Dorsolateral prefrontal cortex (tissue), 120 donors: ENCODE measurements at regions of chr15 and their contacts with region 1.

Region 1: GRCh38 chr15:58933281-58934113 is at the start of gene SLTM:
- DNase-seq: peak; percentile 77 to 93 (median 88)
- H3K4me3 ChIP-seq: peak within 1 kb of the TSS; percentile 53 to 97 (median 82)
- H3K27ac ChIP-seq: peak within 1 kb of the TSS; percentile 93 to 100 (median 99)
- H3K27me3 ChIP-seq: no peaks in the 10 kb centered on the region
- CTCF ChIP-seq: peak in 45 of 56 donors; percentile 3 to 70 (median 40)
- total RNA-seq, gene SLTM: 60.6 to 122 (median 90.8) TPM

Region 2: DNA sequence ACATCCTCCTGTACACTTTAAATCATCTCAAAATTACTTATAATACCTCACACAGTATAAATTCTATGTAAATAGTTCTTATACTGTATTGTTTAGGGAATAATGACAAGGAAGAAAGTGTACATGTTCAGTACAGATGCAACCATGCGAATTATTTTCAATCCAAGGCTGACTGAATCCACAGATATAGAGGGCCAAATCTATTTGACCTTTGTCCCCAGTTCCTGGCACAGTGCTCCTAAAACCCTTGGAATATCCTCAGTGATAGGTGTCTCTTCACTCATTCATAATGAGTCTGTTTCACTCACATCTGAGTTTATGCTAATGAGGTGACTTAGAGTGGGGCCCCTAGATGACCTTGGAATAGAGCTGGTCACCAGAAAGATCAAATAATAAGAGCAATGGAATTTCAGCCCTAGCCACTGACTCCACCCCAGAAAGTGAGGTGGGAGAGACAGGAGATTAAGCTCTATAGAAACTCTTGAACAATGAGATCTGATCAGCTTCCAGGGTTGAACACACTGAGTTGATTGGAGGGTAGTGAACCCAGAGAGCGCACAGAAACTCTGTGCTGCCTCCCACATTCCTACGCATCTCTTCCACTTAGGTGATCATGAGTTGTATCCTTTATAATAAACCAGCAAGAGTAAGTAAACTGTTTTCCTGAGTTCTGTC is 249.3 kb before region 1 on chr15:
- intact Hi-C with region 1: loop called in 1 of 2 experiments (anchors 10 kb)
- DNase-seq: no peak
- H3K4me3 ChIP-seq: no peak overlapping the region
- H3K27ac ChIP-seq: no peak overlapping the region
- H3K27me3 ChIP-seq: no peaks in the 10 kb centered on the region
- CTCF ChIP-seq: no peak

Region 3: DNA sequence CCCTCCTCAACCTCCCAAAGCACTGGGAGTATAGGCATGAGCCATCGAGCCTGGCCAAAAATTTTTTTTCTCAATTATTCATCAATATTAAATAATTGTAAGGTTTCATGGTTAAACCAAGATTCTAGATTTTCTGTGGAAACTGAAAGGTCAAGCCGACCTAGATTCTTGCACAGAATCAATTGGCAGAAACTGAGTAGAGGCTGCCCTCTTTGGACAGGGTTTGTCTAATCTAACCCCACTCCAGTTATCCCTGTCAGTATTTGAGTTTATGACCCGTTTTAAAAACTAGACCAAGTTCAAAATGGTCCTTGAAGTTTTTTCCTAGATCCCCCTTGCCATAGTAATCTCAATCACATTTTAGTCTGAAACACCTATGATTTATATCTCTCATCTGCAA is 175.4 kb before region 1 on chr15:
- intact Hi-C with region 1: loop called in 1 of 2 experiments (anchors 5 kb)
- DNase-seq: no peak
- H3K4me3 ChIP-seq: no peak overlapping the region
- H3K27ac ChIP-seq: peak overlapping the region in 6 of 59 donors; percentile 8 to 50 (median 34)
- H3K27me3 ChIP-seq: no peaks in the 10 kb centered on the region
- CTCF ChIP-seq: peak in 52 of 56 donors; percentile 18 to 75 (median 54)

Region 4: DNA sequence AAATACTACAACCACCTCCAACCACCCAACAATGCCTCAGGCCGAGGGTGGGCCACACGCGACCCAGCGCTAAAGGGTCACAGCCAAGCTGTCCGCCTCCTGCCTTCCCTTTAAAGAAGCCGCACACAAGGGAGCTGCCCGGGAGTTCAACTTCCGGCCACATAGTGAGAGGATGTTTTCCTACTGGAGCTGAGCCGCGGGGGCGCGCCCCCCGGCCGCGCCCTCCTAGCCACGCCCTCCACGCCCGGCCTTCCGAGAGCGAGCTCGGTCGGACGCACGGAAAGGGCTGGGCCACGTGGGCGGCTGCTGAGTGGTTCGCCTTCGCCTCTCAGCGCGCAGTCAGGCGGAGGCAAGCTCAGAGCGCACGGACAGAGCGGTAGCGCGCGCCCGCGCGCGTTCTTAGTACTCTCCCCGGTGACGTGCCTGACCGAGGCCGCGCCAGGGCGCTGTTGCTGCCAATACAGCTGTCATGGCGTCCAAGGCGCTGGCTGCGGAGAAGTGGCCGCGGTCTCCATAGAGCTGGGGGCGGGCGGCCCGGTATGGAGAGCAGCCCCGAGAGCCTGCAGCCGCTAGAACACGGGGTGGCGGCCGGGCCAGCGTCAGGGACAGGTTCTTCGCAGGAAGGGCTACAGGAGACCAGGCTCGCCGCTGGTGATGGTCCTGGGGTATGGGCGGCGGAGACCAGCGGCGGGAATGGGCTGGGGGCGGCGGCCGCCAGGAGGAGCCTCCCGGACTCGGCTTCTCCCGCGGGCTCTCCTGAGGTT is 162.5 kb before region 1 on chr15 and contains the start of gene MINDY2:
- intact Hi-C with region 1: loop called (anchors 1 kb)
- DNase-seq: peak; percentile 96 to 99 (median 98)
- H3K4me3 ChIP-seq: peak within 1 kb of the TSS; percentile 67 to 99 (median 95)
- H3K27ac ChIP-seq: peak within 1 kb of the TSS; percentile 91 to 100 (median 99)
- H3K27me3 ChIP-seq: no peaks in the 10 kb centered on the region
- CTCF ChIP-seq: peak in 47 of 56 donors; percentile 4 to 68 (median 35)
- total RNA-seq, gene MINDY2: 28.6 to 56.4 (median 40.0) TPM